ENCODE measurements at regions of chr1 and their contacts with region 1.

Region 1: GRCh38 chr1:153548722-153549695 is at the start of gene S100A3:
- DNase-seq: peak; percentile 91 to 96
- H3K4me3 ChIP-seq: peak within 1 kb of the TSS in 1 of 2 donors; percentile 4
- H3K27ac ChIP-seq: peak within 1 kb of the TSS; percentile 99
- H3K4me1 ChIP-seq: peaks cover 86% of the 10 kb centered on the region
- H3K27me3 ChIP-seq: no peaks in the 10 kb centered on the region
- CTCF ChIP-seq: peak in 1 of 3 experiments; percentile 12
- POLR2A ChIP-seq: no peak
- total RNA-seq, gene S100A3: 9.6 TPM

Region 2: GRCh38 chr1:153040950-153041631 is 507.9 kb before region 1 on chr1 and contains the start of gene SPRR2D:
- intact Hi-C with region 1: no loop called
- DNase-seq: no peak
- H3K4me3 ChIP-seq: no peak within 1 kb of the TSS
- H3K27ac ChIP-seq: no peak within 1 kb of the TSS
- H3K4me1 ChIP-seq: no peaks in the 10 kb centered on the region
- H3K27me3 ChIP-seq: no peaks in the 10 kb centered on the region
- CTCF ChIP-seq: no peak
- POLR2A ChIP-seq: no peak
- total RNA-seq, gene SPRR2D: 49.6 TPM

Region 3: GRCh38 chr1:153526132-153526543 is 22.9 kb before region 1 on chr1:
- intact Hi-C with region 1: no loop called
- DNase-seq: no peak
- H3K4me3 ChIP-seq: no peak overlapping the region
- H3K27ac ChIP-seq: peak overlapping the region; percentile 66
- H3K4me1 ChIP-seq: peaks cover 29% of the 10 kb centered on the region
- H3K27me3 ChIP-seq: no peaks in the 10 kb centered on the region
- CTCF ChIP-seq: no peak
- POLR2A ChIP-seq: no peak

Region 4: DNA sequence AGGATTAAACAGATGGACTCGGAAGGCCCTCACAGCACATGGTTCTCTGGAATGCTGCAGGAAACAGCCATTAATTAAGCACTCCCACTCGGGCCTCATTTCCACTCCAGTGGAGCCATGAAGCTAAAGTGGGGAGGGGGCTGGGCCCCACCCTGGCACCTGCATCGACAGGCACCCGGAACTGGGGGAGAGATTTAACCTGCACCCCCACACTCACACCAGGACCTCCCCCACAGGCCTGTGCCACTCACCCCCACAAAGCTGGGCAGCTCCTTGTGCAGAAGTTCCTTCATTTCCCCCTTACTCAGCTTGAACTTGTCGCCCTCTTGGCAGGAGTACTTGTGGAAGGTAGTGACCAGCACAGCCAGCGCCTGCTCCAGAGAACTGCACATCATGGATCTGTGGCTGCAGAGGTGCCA is 14.5 kb after region 1 on chr1:
- intact Hi-C with region 1: loop called (anchors 2 kb)
- DNase-seq: peak in 1 of 2 donors; percentile 89
- H3K4me3 ChIP-seq: peak overlapping the region; percentile 9 to 36
- H3K27ac ChIP-seq: peak overlapping the region; percentile 98
- H3K4me1 ChIP-seq: peaks cover 34% of the 10 kb centered on the region
- H3K27me3 ChIP-seq: no peaks in the 10 kb centered on the region
- CTCF ChIP-seq: no peak
- POLR2A ChIP-seq: no peak

Region 5: DNA sequence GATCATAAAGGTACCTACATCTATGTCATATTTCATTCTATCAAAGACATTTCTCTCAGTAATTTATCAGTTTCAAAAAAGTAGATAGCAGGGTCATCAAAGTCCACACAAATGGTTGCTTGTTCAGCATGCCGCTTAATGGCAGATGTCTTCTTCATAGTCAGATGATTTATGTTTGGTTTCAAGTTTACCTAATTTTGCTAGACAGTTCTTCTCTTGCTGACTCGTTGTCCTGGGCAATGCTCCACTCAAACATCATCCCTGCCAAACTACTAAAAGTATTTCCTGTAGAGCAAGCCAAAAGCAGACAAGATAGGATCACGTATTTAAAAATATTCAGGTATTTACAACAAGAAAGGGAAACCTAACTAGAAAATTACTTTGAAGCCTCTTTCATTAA is 592.2 kb after region 1 on chr1:
- intact Hi-C with region 1: no loop called
- DNase-seq: no peak
- H3K4me3 ChIP-seq: no peak overlapping the region
- H3K27ac ChIP-seq: no peak overlapping the region
- H3K4me1 ChIP-seq: peaks cover 15% of the 10 kb centered on the region
- H3K27me3 ChIP-seq: no peaks in the 10 kb centered on the region
- CTCF ChIP-seq: no peak
- POLR2A ChIP-seq: no peak

Measured in vagina (tissue), 2 donors.